ENCODE measurements at regions of chr14 and their contacts with region 1.

Region 1: GRCh38 chr14:54691525-54692283 is 124.8 kb downstream of the SAMD4A start:
- H3K4me3 ChIP-seq: no peak overlapping the region
- H3K27ac ChIP-seq: no peak overlapping the region
- H3K4me1 ChIP-seq: no peaks in the 10 kb centered on the region
- CTCF ChIP-seq: 0 out of 2 replicates have a peak, but pooled peaks have one; percentile 15

Region 2: GRCh38 chr14:54572316-54572715 is 119.4 kb before region 1 on chr14:
- CTCF ChIA-PET with region 1: interaction called, 20 read pairs
- POLR2A ChIA-PET with region 1: interaction called, 10 read pairs
- H3K4me3 ChIP-seq: no peak overlapping the region
- H3K27ac ChIP-seq: no peak overlapping the region
- H3K4me1 ChIP-seq: no peaks in the 10 kb centered on the region
- CTCF ChIP-seq: no peak

Region 3: GRCh38 chr14:54579621-54580020 is 112.1 kb before region 1 on chr14:
- CTCF ChIA-PET with region 1: interaction called, 20 read pairs
- POLR2A ChIA-PET with region 1: no interaction called
- H3K4me3 ChIP-seq: no peak overlapping the region
- H3K27ac ChIP-seq: no peak overlapping the region
- H3K4me1 ChIP-seq: no peaks in the 10 kb centered on the region
- CTCF ChIP-seq: no peak

Region 4: GRCh38 chr14:54614296-54614695 is 77.4 kb before region 1 on chr14:
- CTCF ChIA-PET with region 1: no interaction called
- POLR2A ChIA-PET with region 1: no interaction called
- H3K4me3 ChIP-seq: no peak overlapping the region
- H3K27ac ChIP-seq: no peak overlapping the region
- H3K4me1 ChIP-seq: no peaks in the 10 kb centered on the region
- CTCF ChIP-seq: no peak

Region 5: DNA sequence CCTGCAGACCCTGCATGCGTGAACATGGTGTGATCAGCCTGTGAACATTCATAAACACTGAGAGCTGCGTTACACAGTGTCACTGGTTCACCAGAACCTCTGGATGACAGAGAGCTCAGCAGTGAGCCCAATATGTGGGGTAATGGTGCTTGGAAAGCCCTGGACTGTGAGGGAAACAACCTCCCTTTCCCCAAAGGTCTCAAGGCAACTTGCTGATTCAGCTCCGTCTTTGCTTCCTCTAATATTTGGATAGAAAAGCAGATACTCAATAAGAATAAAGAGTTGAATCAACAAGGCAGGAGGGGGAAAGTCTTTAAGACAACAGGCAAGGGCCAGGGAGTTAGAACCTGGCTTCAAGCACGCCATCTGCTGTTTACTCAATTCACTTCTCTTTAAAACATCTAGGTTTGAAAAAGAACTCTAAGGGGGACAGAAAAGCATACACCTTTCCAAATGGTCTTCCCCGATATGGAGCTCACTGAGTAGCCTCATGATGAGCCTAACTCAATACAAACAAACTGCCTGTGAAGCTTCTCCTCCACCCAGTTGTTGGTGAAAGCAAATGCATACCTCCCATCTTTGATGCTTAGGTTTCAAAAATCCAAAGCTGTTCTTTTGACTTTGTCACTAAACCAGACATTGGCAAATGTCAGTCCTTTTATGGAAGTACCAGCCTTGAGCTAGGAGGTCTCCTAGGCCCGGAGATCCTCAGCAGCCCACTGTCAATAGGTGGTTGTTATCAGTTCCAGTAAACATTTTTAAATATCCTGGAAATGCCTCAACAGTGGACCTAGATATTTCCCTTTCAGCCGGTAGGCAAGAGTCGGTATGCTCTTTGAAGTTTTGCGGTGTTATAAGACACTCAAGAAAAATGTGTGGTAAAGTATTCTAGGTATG is 48.7 kb before region 1 on chr14:
- CTCF ChIA-PET with region 1: interaction called, 10 read pairs
- POLR2A ChIA-PET with region 1: no interaction called
- H3K4me3 ChIP-seq: no peak overlapping the region
- H3K27ac ChIP-seq: no peak overlapping the region
- H3K4me1 ChIP-seq: no peaks in the 10 kb centered on the region
- CTCF ChIP-seq: no peak

Region 6: DNA sequence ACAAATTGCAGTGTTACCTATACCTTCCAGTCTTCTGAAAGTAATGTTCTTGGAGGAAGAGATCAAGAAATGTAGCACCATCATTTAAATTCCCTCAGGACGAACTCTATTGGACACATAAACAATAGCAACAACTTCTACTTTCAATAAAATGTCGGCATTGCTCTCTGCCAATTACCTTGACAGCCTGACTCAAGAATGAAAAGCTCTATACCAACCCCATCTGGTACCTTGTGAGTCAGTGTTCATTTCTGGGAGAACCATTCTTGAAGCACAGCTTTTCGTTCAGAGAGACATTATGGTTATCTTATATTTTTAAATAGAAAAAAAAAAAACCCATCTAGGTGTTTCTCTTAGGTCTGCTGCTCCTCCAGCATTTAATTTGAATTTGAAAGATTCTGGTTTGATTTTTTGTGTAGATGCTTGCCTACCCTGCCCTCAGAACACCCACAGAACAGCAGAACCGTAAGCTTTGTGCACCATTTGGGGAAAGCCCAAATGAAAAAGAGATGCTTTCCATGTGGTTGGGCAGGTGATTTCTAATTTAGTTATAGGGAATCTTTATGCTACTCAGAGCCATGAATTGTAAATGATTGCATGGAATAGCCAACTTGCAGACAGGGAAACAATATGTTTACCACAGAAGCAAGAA is 31.2 kb after region 1 on chr14:
- CTCF ChIA-PET with region 1: interaction called, 22 read pairs
- POLR2A ChIA-PET with region 1: no interaction called
- H3K4me3 ChIP-seq: no peak overlapping the region
- H3K27ac ChIP-seq: no peak overlapping the region
- H3K4me1 ChIP-seq: no peaks in the 10 kb centered on the region; the same call in 1 of the 2 replicates
- CTCF ChIP-seq: no peak